ENCODE measurements at regions of chr7 and their contacts with region 1.

Region 1: DNA sequence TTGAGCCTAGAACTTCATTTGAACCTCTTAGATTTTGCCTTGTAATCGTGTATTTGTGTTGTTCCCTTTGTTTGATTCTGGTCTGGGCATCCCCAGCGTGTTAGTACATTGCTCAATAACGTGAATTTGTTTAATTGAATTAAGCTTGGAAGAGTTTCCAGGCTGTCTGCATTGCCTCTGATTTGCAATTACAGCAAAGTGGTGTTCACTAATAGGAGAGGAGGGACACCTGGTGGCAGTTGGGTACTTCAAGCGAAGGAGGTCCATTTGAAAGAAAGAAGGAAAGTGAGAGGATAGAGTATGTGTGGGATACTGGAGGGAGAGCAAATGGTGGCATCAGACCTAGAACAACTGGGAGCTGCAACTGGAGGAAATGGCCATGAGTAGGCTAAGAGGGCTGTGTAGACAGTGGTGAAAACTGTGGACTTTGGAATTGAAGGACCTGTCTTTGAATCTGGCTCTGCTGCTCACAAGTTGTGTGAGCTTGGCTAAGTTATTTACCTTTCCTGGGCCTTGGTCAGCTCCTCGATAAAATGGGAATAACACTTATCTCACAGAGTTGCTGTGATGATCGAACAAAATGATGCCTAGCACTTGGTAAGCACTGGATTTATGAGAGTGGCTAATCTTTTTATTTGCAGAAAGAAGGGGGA is 15.1 kb downstream of the LSMEM1 start:
- DNase-seq: peak in 1 of 2 donors; percentile 74
- H3K4me3 ChIP-seq: no peak overlapping the region
- H3K27ac ChIP-seq: no peak overlapping the region
- H3K4me1 ChIP-seq: no peaks in the 10 kb centered on the region
- H3K27me3 ChIP-seq: no peaks in the 10 kb centered on the region
- CTCF ChIP-seq: peak; percentile 63 to 79 (median 68)

Region 2: GRCh38 chr7:112390167-112390566 is 105.8 kb before region 1 on chr7:
- intact Hi-C with region 1: loop called (anchors 5 kb)
- DNase-seq: no peak
- H3K4me3 ChIP-seq: no peak overlapping the region
- H3K27ac ChIP-seq: no peak overlapping the region
- H3K4me1 ChIP-seq: peaks cover 0 to 3% of the 10 kb centered on the region in 2 donors
- H3K27me3 ChIP-seq: no peaks in the 10 kb centered on the region
- CTCF ChIP-seq: no peak